ENCODE measurements at regions of chr11 and their contacts with region 1.

Region 1: DNA sequence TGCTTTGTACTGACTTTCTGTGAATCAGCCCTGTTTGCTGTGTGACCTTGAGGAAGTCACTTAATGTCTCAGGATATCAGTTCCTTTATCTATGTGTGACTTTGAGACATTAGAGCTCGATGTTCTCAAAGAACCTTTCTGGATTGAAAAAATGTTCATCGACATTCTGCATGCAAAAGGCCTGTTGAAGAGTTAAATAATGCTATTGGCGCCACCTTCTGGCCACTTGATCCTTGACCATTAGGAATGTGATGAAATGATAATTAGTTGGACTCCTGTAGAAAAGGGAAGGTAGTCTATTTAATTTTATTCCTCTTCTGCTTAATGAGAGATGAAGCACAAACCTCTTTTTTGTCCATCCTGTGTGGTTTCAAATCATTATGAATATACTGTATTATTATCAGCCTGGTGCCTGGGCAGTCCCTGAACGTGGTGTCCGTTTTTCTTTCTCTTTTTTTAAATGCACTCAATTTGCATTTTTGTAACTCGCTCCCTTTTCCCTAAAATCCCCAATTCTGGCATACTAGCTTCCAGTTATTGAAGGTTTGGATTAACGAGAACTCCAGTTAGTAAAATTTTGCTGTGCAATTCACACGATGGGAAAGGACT is 20.7 kb downstream of the ELF5 start:
- DNase-seq: no peak
- H3K4me3 ChIP-seq: no peak overlapping the region
- CTCF ChIP-seq: peak; percentile 55

Region 2: GRCh38 chr11:34149786-34150185 is 343.1 kb before region 1 on chr11:
- CTCF ChIA-PET with region 1: interaction called, 11 read pairs
- POLR2A ChIA-PET with region 1: no interaction called
- DNase-seq: no peak
- H3K4me3 ChIP-seq: no peak overlapping the region
- CTCF ChIP-seq: peak; percentile 69

Region 3: GRCh38 chr11:34208266-34209135 is 284.4 kb before region 1 on chr11:
- CTCF ChIA-PET with region 1: no interaction called
- POLR2A ChIA-PET with region 1: no interaction called
- DNase-seq: no peak
- H3K4me3 ChIP-seq: no peak overlapping the region
- CTCF ChIP-seq: no peak

Region 4: DNA sequence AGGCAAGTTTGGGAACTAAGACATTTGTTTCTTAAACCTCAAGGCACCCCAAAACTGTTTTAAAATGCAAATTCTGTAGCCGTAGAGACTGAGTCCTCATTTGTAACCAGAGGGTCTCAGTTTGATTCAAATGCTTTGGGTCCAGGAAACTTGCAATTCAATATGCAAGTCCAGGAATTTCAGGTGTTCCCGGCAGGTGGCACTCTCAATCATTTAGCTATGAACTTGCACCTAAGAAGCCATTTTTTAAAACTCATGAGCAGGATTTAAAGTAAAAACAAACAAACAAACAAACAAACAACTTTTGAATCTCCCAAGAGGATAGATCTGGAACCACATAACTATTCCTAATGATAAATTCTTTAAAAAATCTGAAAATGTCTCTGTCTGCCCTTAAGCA is 126.4 kb before region 1 on chr11:
- CTCF ChIA-PET with region 1: interaction called, 133 read pairs
- POLR2A ChIA-PET with region 1: no interaction called
- DNase-seq: no peak
- H3K4me3 ChIP-seq: no peak overlapping the region
- CTCF ChIP-seq: no peak

Region 5: GRCh38 chr11:34454308-34455032 is 38.4 kb before region 1 on chr11:
- CTCF ChIA-PET with region 1: interaction called, 11 read pairs
- POLR2A ChIA-PET with region 1: no interaction called
- DNase-seq: no peak
- H3K4me3 ChIP-seq: no peak overlapping the region
- CTCF ChIP-seq: no peak

Region 6: GRCh38 chr11:34468209-34468841 is 24.6 kb before region 1 on chr11:
- CTCF ChIA-PET with region 1: interaction called, 10 read pairs
- POLR2A ChIA-PET with region 1: no interaction called
- DNase-seq: no peak
- H3K4me3 ChIP-seq: no peak overlapping the region
- CTCF ChIP-seq: peak; percentile 43

Region 7: DNA sequence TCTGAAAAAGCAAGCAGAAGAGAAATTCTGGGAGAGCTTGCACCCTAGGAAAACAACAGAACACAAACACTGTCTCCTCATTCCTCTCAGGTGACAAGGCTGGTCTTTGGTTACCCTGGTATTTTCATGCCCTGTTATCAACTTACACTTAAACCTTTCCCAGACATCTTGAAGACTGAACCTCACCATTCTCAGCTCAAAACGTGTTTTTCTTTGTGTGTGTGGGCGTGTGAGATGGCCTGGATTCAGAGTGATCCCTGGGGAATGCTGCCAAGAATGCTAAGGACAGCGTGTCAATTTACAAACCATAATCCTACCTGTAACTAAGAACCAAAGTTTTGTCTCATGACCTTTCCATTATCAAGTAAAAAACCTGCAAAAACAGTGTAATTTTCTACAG is 12.6 kb before region 1 on chr11:
- CTCF ChIA-PET with region 1: interaction called, 47 read pairs
- POLR2A ChIA-PET with region 1: no interaction called
- DNase-seq: no peak
- H3K4me3 ChIP-seq: no peak overlapping the region
- CTCF ChIP-seq: no peak

Region 8: GRCh38 chr11:34512840-34513681 is 20.2 kb after region 1 on chr11:
- CTCF ChIA-PET with region 1: interaction called, 10 read pairs
- POLR2A ChIA-PET with region 1: no interaction called
- DNase-seq: no peak
- H3K4me3 ChIP-seq: no peak overlapping the region
- CTCF ChIP-seq: peak; percentile 89

Measured in AG04449 (cell line).